Colonic mucosa (tissue), 4 donors: ENCODE measurements at regions of chr4 and their contacts with region 1.

Region 1: GRCh38 chr4:120977435-120977997 is 55.0 kb upstream of the PRDM5 start:
- DNase-seq: peak; percentile 59
- H3K4me3 ChIP-seq: no peak overlapping the region
- H3K27ac ChIP-seq: no peak overlapping the region
- H3K4me1 ChIP-seq: no peaks in the 10 kb centered on the region
- H3K27me3 ChIP-seq: no peaks in the 10 kb centered on the region
- CTCF ChIP-seq: peak; percentile 46

Region 2: DNA sequence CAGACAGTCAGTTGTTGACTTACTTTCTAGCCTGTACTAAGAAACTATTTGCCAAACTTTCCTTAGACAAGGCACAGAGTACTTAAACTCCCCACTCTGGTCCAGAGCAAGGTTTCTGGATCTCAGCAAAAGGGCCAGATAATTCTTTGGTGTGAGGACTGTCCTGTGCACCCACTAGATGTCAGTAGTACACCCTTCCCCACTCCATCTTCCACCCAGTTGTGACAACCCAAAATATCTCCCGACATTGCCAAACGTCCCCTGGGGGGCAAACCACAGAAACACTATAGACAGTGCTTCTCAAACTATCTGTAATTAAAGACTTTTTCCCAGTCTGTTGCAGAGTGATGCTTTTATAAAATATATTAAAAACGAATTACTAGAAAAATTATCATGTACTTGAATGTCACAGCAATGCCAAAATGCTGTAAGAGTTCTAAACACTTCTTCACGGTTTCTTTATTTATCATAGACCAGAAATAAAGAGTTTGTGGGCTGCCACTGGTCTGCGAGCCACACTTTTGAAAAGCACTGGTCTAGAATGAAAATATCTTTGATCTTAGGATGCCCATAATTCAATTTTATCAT is 258.4 kb before region 1 on chr4:
- intact Hi-C with region 1: loop called (anchors 5 kb)
- DNase-seq: peak; percentile 25
- H3K4me3 ChIP-seq: no peak overlapping the region
- H3K27ac ChIP-seq: no peak overlapping the region
- H3K4me1 ChIP-seq: no peaks in the 10 kb centered on the region
- H3K27me3 ChIP-seq: no peaks in the 10 kb centered on the region
- CTCF ChIP-seq: peak; percentile 48

Region 3: DNA sequence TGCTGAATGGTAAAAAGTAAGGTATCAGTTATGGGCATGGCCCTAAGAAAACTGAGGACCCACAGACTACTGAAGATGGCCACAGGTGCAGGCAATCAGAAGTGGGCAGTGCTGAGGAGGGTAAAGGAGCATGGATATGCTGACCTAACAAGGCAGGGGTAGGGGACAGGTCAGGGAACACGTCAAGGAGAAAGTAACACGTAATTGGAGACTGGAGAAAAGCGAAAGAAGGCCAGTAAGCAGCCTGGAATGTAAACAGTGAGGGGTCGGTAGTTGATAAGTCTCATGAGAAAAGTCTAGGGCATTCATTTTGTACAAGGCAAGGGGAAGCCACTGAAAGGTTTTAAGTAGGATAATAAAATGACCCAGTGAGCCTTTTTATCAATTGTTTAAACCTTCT is 208.3 kb before region 1 on chr4:
- intact Hi-C with region 1: no loop called
- DNase-seq: no peak
- H3K4me3 ChIP-seq: no peak overlapping the region
- H3K27ac ChIP-seq: no peak overlapping the region
- H3K4me1 ChIP-seq: no peaks in the 10 kb centered on the region
- H3K27me3 ChIP-seq: no peaks in the 10 kb centered on the region
- CTCF ChIP-seq: no peak

Region 4: DNA sequence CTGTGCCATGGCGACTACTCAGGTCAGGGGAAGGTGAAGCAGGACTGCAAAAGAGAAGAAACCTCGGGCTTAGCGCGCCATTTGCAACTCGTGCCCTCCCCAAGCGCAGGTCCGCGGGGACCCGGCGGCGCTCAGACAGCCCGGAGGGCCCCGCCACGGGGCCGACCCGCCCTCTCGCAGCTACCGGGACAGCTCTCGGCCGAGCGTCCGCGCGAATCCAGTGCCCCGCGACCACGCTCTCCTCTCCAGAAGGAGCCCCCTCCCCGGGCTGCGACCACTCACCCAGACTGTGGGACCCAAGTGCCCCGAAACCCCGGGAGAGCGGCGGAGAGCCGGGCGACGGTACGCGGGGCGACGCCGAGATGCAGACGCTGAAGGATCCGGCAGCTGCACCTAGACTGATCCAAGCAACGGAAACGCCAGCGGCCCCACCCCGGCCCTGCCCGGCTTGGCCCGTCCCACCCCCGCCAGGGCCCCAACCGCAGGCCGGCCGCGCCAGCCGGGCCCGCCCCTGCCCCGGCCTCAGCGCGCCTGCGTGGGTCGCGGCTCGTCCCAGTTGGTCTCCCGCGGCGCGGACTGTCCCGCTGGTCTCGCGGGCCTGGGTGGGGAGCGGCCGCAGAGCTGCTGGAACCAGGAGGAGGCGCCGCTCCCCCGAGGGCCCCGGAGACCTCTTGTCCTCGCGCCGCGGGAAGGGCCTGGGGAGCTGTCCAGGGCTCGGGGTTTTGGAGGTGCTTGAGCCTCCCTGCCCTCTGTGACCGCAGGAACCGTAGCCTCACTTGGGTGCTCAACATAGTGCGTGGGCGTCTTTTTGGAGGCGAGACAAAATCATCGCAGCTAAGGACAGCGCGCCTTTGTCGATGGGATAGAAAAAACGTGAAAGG is 719.3 kb after region 1 on chr4 and contains the start of gene ANXA5:
- intact Hi-C with region 1: no loop called
- DNase-seq: peak; percentile 88
- H3K4me3 ChIP-seq: peak within 1 kb of the TSS; percentile 97
- H3K27ac ChIP-seq: peak within 1 kb of the TSS; percentile 95
- H3K4me1 ChIP-seq: no peaks in the 10 kb centered on the region
- H3K27me3 ChIP-seq: no peaks in the 10 kb centered on the region
- CTCF ChIP-seq: no peak
- total RNA-seq, gene ANXA5: 88.4 to 122 TPM